GM12878 (cell line): ENCODE measurements at regions of chr20 and their contacts with region 1.

Region 1: GRCh38 chr20:4014031-4014474 is 1.3 kb downstream of the RNF24 start:
- DNase-seq: no peak
- ATAC-seq: peak; percentile 35
- H3K4me3 ChIP-seq: peak overlapping the region; percentile 87
- H3K27ac ChIP-seq: no peak overlapping the region
- H3K4me1 ChIP-seq: peaks cover 20% of the 10 kb centered on the region
- H3K27me3 ChIP-seq: no peaks in the 10 kb centered on the region
- CTCF ChIP-seq: peak; percentile 50 to 73 (median 59)
- EP300 ChIP-seq: no peak
- POLR2A ChIP-seq: no peak
- RAD21 ChIP-seq: peak; percentile 83

Region 2: DNA sequence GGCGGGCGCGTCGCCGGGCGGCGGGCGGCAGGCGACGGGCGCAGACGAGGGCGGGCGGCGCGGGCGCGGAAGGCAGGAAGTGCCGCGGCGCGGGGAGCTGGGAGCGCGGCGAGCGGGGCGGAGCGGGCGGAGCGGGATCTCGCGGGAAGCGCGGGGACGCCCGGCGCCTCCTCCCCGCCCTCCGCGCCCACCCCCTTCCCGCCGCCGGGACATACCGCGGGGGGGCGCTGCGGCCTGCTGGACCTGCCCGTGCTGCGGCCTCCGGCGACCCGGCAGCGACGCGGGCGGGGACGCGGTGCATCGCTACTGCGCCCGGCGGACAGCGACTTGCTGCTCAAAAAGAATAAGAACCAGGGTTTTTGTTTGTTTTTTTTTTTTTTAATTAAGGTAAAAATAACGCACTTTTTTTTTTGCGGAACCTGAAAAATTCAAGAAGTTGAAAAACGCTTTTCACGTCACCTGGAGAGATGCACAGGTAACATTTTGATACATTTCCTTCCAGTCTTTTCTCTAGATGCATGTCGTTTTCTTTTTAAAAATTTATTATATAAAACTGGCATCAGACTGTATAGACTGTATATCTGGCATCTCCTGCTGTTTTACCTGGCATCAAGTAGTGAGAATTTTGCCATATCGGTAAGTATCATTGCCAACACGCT is 227.3 kb before region 1 on chr20 and contains the start of gene CENPB:
- CTCF ChIA-PET with region 1: interaction called, 6 read pairs
- POLR2A ChIA-PET with region 1: no interaction called
- RAD21 ChIA-PET with region 1: no interaction called
- SMC1A ChIA-PET with region 1: interaction called, 3 read pairs
- in situ Hi-C with region 1: no loop called
- intact Hi-C with region 1: loop called (anchors 10 kb)
- DNase-seq: no peak
- ATAC-seq: peak; percentile 97
- H3K4me3 ChIP-seq: peak within 1 kb of the TSS; percentile 82
- H3K27ac ChIP-seq: peak within 1 kb of the TSS; percentile 50
- H3K4me1 ChIP-seq: peaks cover 17% of the 10 kb centered on the region
- H3K27me3 ChIP-seq: no peaks in the 10 kb centered on the region
- CTCF ChIP-seq: peak; percentile 70 to 86 (median 71)
- EP300 ChIP-seq: no peak
- POLR2A ChIP-seq: 0 out of 2 replicates have a peak, but pooled peaks have one; percentile 54
- RAD21 ChIP-seq: peak; percentile 84
- polyA plus RNA-seq, gene CENPB: 0.16 to 0.29 TPM

Region 3: DNA sequence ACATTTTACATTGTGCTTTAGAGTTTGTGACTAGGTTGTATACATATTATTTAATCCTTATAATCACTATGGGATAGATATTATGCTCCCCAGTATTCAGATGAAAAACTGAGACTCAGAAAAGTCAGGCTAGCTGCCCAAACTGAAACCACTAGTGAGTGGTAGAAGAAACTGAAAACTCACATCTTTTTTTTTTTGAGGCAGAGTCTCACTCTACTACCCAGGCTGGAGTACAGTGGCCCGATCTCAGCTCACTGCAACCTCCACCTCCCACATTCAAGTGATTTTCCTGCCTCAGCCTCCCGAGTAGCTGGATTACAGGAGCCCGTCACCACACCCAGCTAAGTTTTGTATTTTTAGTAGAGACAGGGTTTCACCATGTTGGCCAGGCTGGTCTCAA is 20.9 kb before region 1 on chr20:
- CTCF ChIA-PET with region 1: interaction called, 13 read pairs
- POLR2A ChIA-PET with region 1: interaction called, 6 read pairs
- RAD21 ChIA-PET with region 1: interaction called, 3 read pairs
- SMC1A ChIA-PET with region 1: interaction called, 7 read pairs
- in situ Hi-C with region 1: no loop called
- intact Hi-C with region 1: no loop called
- DNase-seq: no peak
- ATAC-seq: peak; percentile 90
- H3K4me3 ChIP-seq: no peak overlapping the region
- H3K27ac ChIP-seq: no peak overlapping the region
- H3K4me1 ChIP-seq: peaks cover 32% of the 10 kb centered on the region
- H3K27me3 ChIP-seq: no peaks in the 10 kb centered on the region
- CTCF ChIP-seq: no peak
- EP300 ChIP-seq: no peak
- POLR2A ChIP-seq: no peak
- RAD21 ChIP-seq: no peak

Region 4: DNA sequence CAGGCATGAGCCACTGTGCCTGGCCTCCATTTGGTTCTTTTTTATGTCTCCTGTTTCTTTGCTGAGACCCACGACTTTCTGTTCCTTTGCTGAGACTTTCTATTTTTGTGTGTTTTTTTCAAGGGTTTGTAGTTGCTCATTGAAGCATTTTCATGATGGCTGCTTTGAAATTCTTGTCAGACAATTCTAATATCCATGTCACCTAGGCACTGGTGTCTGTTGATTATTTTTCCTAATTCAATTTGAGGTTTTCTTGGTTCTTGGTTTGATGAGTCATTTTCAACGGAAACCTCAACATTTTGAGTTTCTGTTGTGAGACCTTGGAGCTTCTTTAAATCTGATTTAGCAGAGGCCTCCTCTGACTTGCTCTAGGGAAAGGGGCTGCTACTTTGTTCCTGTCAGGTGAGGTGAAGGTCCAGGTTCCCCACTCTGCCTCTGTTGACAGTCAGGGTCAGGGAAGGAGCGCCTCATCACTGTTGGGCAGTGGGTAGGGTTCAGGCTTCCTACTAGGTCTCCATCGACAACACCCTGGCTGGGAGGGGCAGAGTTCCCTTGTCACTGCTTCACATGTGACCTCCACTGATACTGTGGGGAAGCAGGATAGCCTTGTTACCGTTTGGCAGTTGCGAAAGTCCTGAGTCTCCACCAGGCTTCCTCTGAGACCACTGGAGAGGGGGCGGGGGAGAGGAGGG is 68.5 kb after region 1 on chr20:
- CTCF ChIA-PET with region 1: interaction called, 19 read pairs
- POLR2A ChIA-PET with region 1: no interaction called
- RAD21 ChIA-PET with region 1: interaction called, 9 read pairs
- SMC1A ChIA-PET with region 1: interaction called, 5 read pairs
- in situ Hi-C with region 1: no loop called
- intact Hi-C with region 1: loop called (anchors 1 kb)
- DNase-seq: peak; percentile 59
- ATAC-seq: peak; percentile 77
- H3K4me3 ChIP-seq: no peak overlapping the region; the same call in 1 of the 2 replicates
- H3K27ac ChIP-seq: peak overlapping the region; percentile 66
- H3K4me1 ChIP-seq: peaks cover 22% of the 10 kb centered on the region
- H3K27me3 ChIP-seq: no peaks in the 10 kb centered on the region; a peak in 1 of 4 replicates
- CTCF ChIP-seq: no peak
- EP300 ChIP-seq: peak in 1 of 2 experiments; percentile 24; a peak in 1 of 4 replicates
- POLR2A ChIP-seq: no peak; the same call in 1 of the 2 replicates
- RAD21 ChIP-seq: no peak

Region 5: GRCh38 chr20:4089756-4090487 is 75.9 kb after region 1 on chr20:
- CTCF ChIA-PET with region 1: interaction called, 19 read pairs
- POLR2A ChIA-PET with region 1: no interaction called
- RAD21 ChIA-PET with region 1: interaction called, 9 read pairs
- SMC1A ChIA-PET with region 1: interaction called, 5 read pairs
- in situ Hi-C with region 1: no loop called
- intact Hi-C with region 1: loop called (anchors 1 kb)
- DNase-seq: no peak
- ATAC-seq: no peak
- H3K4me3 ChIP-seq: no peak overlapping the region
- H3K27ac ChIP-seq: no peak overlapping the region
- H3K4me1 ChIP-seq: peaks cover 6% of the 10 kb centered on the region
- H3K27me3 ChIP-seq: no peaks in the 10 kb centered on the region; a peak in 1 of 4 replicates
- CTCF ChIP-seq: no peak
- EP300 ChIP-seq: no peak
- POLR2A ChIP-seq: no peak
- RAD21 ChIP-seq: no peak

Region 6: GRCh38 chr20:4160761-4161305 is 146.8 kb after region 1 on chr20:
- CTCF ChIA-PET with region 1: no interaction called
- POLR2A ChIA-PET with region 1: no interaction called
- RAD21 ChIA-PET with region 1: no interaction called
- SMC1A ChIA-PET with region 1: no interaction called
- in situ Hi-C with region 1: no loop called
- intact Hi-C with region 1: no loop called
- DNase-seq: no peak
- ATAC-seq: peak; percentile 63
- H3K4me3 ChIP-seq: no peak overlapping the region
- H3K27ac ChIP-seq: no peak overlapping the region
- H3K4me1 ChIP-seq: no peaks in the 10 kb centered on the region
- H3K27me3 ChIP-seq: peaks cover 0 to 5% of the 10 kb centered on the region in 2 experiments; a peak in 1 of 4 replicates
- CTCF ChIP-seq: no peak
- EP300 ChIP-seq: no peak
- POLR2A ChIP-seq: no peak
- RAD21 ChIP-seq: no peak